Endothelial cell of umbilical vein (primary cell): ENCODE measurements at regions of chr1 and their contacts with region 1.

Region 1: DNA sequence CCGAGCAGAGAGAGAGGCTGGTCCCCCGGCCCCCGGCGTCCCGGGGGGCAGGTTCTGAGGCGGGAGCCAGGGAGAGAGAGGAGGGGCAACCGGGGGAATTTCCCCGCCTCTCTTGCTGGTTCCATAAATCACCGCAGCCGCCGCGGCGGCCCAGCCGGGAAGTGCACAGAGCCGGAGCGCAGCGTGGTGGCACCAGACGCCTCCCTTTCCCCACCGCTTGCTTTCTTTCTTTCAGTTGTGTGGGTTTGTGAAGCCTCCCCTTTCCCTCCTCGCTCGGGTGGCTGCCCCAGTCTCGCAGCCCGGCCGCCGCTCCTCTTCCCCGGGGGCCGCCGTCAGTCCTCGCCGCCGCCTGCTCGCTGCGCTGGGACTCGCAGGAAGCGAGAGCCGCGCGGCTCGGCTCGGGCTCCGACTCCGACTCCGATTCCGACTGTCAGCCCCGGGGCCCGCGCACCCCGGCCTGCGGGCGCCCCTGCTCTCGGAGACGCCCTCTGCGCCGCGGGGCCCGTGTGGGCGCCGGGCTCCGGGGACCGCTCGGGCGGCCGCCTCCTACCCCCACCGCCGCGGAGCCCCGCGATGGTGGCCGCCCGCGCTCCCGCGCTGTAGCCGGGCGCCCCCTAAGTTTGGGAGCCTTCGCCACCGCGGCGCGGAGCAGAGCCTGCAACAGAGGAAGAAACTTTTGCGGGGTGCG is at the start of gene CACHD1:
- DNase-seq: peak; percentile 88
- H3K4me3 ChIP-seq: peak within 1 kb of the TSS; percentile 60 to 83 (median 78)
- H3K27ac ChIP-seq: peak within 1 kb of the TSS; percentile 48
- H3K4me1 ChIP-seq: peaks cover 23% of the 10 kb centered on the region
- H3K27me3 ChIP-seq: peaks cover 2 to 4% of the 10 kb centered on the region in 2 experiments
- CTCF ChIP-seq: peak; percentile 6 to 51
- POLR2A ChIP-seq: peak; percentile 67
- total RNA-seq, gene CACHD1: 8.7 and 9.3 TPM in 2 replicates

Region 2: GRCh38 chr1:64171797-64172281 is 298.3 kb before region 1 on chr1:
- CTCF ChIA-PET with region 1: no interaction called
- POLR2A ChIA-PET with region 1: no interaction called
- dilution Hi-C with region 1: no loop called
- intact Hi-C with region 1: no loop called
- DNase-seq: peak; percentile 38
- H3K4me3 ChIP-seq: no peak overlapping the region
- H3K27ac ChIP-seq: no peak overlapping the region
- H3K4me1 ChIP-seq: peaks cover 14% of the 10 kb centered on the region
- H3K27me3 ChIP-seq: no peaks in the 10 kb centered on the region
- CTCF ChIP-seq: no peak
- POLR2A ChIP-seq: no peak

Region 3: DNA sequence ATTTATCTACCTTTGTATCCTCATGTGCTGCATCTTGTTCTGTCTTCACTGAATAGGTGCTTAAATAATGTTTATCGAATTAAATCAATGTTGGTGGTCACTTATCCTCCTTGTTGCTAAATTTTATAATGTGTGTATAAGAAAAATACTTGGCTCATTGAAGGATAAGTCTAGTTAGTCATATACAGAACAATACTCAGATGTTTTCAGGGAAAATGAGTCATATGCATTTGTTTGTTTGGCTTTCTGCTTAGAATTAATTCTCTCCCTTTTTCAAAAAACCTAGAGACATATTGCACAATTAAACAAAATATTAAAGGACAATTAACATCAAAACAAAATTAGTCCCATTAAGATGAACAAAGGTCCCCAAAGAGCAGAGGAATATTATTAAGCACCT is 177.7 kb before region 1 on chr1:
- CTCF ChIA-PET with region 1: no interaction called
- POLR2A ChIA-PET with region 1: no interaction called
- dilution Hi-C with region 1: no loop called
- intact Hi-C with region 1: loop called (anchors 1 kb)
- DNase-seq: peak; percentile 71
- H3K4me3 ChIP-seq: no peak overlapping the region
- H3K27ac ChIP-seq: peak overlapping the region; percentile 56
- H3K4me1 ChIP-seq: peaks cover 22% of the 10 kb centered on the region
- H3K27me3 ChIP-seq: no peaks in the 10 kb centered on the region
- CTCF ChIP-seq: no peak
- POLR2A ChIP-seq: no peak

Region 4: GRCh38 chr1:64539781-64540218 is 69.7 kb after region 1 on chr1:
- CTCF ChIA-PET with region 1: no interaction called
- POLR2A ChIA-PET with region 1: no interaction called
- dilution Hi-C with region 1: no loop called
- intact Hi-C with region 1: loop called (anchors 2 kb)
- DNase-seq: peak; percentile 84
- H3K4me3 ChIP-seq: peak overlapping the region in 1 of 3 experiments; percentile 22
- H3K27ac ChIP-seq: peak overlapping the region; percentile 60
- H3K4me1 ChIP-seq: peaks cover 22% of the 10 kb centered on the region
- H3K27me3 ChIP-seq: no peaks in the 10 kb centered on the region
- CTCF ChIP-seq: no peak
- POLR2A ChIP-seq: no peak

Region 5: GRCh38 chr1:64675718-64676345 is 205.7 kb after region 1 on chr1:
- CTCF ChIA-PET with region 1: no interaction called
- POLR2A ChIA-PET with region 1: no interaction called
- dilution Hi-C with region 1: no loop called
- intact Hi-C with region 1: loop called (anchors 1 kb)
- DNase-seq: peak; percentile 32
- H3K4me3 ChIP-seq: no peak overlapping the region
- H3K27ac ChIP-seq: no peak overlapping the region
- H3K4me1 ChIP-seq: no peaks in the 10 kb centered on the region
- H3K27me3 ChIP-seq: no peaks in the 10 kb centered on the region
- CTCF ChIP-seq: peak; percentile 35 to 67
- POLR2A ChIP-seq: no peak

Region 6: DNA sequence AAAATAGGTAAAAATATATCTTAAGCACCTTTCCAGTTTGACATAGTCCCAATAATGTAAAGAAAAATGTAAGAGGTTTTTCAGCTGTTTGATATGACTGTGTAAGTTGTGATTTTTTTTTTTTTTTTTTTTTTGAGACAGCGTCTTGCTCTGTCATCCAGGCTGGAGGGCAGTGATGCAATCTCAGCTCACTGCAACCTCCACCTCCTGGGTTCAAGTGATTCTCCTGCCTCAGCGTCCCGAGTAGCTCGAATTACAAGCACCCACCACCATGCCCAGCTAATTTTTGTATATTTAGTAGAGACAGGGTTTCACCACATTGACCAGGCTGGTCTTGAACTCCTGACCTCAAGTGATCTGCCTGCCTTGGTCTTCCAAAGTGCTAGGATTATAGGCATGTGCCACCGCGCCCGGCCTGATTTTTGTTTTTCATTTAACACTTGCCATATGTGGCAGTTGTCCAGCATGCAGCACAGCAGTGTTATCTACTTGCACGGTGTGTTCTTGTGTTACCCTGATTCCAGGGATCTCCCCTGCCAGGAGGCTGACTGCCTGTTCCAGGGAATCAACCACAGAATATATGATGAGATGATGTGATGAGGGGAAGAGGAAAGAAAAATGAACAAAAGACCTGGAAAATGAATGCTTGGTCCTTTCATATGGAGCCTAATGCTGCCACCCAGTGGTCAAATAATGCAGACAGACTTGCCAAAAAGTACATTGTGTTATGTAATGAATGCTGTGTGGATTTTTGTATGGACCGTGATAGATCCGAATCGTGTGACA is 353.8 kb after region 1 on chr1:
- CTCF ChIA-PET with region 1: interaction called, 4 read pairs
- POLR2A ChIA-PET with region 1: no interaction called
- dilution Hi-C with region 1: no loop called
- intact Hi-C with region 1: loop called (anchors 2 kb)
- DNase-seq: peak; percentile 81
- H3K4me3 ChIP-seq: no peak overlapping the region
- H3K27ac ChIP-seq: no peak overlapping the region
- H3K4me1 ChIP-seq: peaks cover 2% of the 10 kb centered on the region
- H3K27me3 ChIP-seq: no peaks in the 10 kb centered on the region
- CTCF ChIP-seq: peak; percentile 61 to 69
- POLR2A ChIP-seq: no peak